ENCODE measurements at regions of chr2 and their contacts with region 1.

Region 1: DNA sequence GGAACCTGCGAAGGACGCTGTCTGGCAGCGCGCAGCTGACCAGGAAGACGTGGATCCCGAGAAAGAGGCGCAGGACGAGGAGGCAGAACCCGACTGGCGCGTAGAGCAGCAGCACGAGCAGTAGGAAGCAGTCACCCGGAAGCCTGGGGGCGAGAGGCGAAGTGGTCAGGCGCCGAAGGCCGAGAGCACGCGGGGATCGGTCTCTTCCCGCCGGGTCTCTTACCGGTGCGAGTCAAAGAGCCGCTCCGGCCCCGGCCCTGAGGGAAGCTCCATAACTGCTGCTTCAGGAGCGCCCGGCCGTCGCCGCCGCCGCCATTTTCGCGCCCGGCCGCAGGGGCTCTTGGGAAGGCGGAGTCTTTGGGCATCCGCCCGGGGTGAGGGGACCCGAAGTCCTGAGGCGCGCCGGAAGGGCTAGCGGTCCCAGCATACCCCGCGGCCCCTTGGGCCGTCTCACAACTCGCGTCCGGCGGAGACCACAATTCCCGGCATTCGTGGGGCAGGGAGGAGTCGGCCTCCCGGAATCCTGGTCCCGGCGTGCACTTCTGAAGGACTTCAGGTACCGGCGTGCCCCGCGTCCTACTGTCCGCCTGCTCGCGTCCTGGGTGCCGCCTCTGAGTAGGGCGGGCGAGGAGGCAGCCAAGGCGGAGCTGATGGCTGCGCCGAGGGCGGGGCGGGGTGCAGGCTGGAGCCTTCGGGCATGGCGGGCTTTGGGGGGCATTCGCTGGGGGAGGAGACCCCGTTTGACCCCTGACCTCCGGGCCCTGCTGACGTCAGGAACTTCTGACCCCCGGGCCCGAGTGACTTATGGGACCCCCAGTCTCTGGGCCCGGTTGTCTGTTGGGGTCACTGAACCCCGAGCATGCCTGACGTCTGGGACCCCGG is at the starts of genes AUP1 and HTRA2:
- DNase-seq: peak; percentile 99
- H3K4me3 ChIP-seq: peak within 1 kb of the TSS; percentile 99
- CTCF ChIP-seq: no peak

Region 2: DNA sequence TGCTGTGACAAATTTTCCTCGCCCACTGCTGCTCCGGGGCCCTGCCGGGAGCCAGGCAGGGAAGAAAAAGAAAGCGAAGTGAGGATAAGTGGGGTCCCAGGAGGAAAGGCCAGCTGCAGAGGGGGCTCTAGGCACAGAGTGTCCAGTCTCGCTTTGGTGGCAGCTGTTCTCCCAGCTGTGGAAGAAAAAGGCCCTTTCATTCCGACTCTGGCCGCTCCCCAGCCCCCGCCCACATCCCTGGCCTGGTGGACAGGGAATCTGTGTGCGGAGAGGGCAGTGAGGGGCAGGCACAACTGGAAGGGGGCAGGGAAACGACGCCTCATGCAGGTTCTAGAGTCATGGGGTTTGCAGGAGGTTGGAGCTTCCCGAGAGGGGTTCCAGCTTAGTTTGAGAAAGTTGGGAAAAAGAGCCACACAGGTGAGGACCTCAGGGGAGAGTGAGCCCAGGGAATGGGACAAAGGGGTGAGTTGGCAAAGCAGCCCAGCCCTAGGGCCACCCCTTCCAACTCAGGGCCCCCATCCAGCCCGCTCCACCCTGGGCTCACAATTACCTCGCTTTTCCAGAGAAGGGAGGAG is 89.7 kb before region 1 on chr2:
- in situ Hi-C with region 1: loop called (anchors 5 kb)
- DNase-seq: no peak
- H3K4me3 ChIP-seq: peak overlapping the region; percentile 54
- CTCF ChIP-seq: no peak

Measured in astrocyte of the cerebellum (primary cell).